CD4-positive, alpha-beta memory T cell (primary cell): ENCODE measurements at regions of chr17 and their contacts with region 1.

Region 1: DNA sequence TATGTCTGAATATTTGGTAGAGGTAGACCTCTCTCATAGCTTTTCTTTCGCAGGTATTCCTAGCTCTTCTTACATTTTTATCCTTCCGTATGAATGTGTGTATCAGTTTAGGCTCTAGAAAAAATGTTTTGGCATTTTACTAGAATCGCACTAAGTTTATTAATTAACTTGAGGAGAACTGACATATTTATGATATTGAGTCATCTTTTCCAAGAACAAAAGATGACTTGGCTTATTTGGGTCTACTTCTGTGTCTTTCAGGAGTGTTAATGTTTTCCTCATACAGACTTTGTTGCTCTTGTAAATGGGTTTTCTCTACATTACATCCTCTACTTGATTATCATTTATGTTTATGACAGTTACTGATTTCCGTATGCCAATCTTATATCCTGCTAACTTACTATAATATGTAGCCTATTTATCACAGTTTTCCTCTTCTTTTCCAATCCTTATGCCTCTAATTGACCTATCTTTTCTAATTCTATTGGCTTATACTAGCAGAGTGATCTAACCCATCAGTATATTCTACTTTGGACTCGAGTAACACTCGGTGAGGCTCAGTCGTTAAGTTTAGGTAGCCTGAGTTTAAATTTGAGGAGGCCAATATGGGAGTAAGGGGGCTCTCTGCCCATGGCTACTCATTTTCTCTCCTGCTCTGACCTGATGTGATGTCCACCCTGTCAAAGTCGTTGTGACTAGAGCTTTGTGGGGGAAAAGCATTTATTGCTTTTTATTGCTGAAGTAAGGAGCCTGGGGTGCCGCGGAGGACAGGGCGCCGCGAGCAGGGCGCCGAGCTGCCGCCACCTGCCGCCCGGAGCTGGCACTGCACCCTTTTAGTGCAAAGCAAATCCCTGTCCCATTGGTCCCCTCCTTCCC is 20.0 kb downstream of the ST6GALNAC1 start:
- DNase-seq: peak; percentile 67 to 73 (median 70)
- H3K4me3 ChIP-seq: no peak overlapping the region
- H3K4me3 Mint-ChIP-seq: no peak overlapping the region
- H3K27ac ChIP-seq: no peak overlapping the region
- H3K27ac Mint-ChIP-seq: peak overlapping the region in 1 of 7 donors; percentile 55
- H3K4me1 ChIP-seq: peaks cover 4% of the 10 kb centered on the region
- H3K4me1 Mint-ChIP-seq: peaks cover 0 to 6% (median under 1%) of the 10 kb centered on the region in 4 donors
- H3K27me3 ChIP-seq: no peaks in the 10 kb centered on the region
- H3K27me3 Mint-ChIP-seq: peaks cover 0 to 1% of the 10 kb centered on the region in 2 donors

Region 2: GRCh38 chr17:76005263-76006149 is 618.0 kb before region 1 on chr17:
- CTCF ChIA-PET with region 1: no interaction called
- POLR2A ChIA-PET with region 1: no interaction called
- intact Hi-C with region 1: no loop called
- DNase-seq: peak; percentile 68 to 76 (median 74)
- H3K4me3 ChIP-seq: no peak overlapping the region
- H3K4me3 Mint-ChIP-seq: no peak overlapping the region
- H3K27ac ChIP-seq: no peak overlapping the region
- H3K27ac Mint-ChIP-seq: peak overlapping the region in 4 of 7 donors; percentile 2 to 59 (median 24)
- H3K4me1 ChIP-seq: no peaks in the 10 kb centered on the region
- H3K4me1 Mint-ChIP-seq: peaks cover 0 to 5% (median 3%) of the 10 kb centered on the region in 4 donors
- H3K27me3 ChIP-seq: no peaks in the 10 kb centered on the region
- H3K27me3 Mint-ChIP-seq: no peaks in the 10 kb centered on the region

Region 3: GRCh38 chr17:76296186-76296585 is 327.3 kb before region 1 on chr17:
- CTCF ChIA-PET with region 1: no interaction called
- POLR2A ChIA-PET with region 1: no interaction called
- intact Hi-C with region 1: no loop called
- DNase-seq: no peak
- H3K4me3 ChIP-seq: no peak overlapping the region
- H3K4me3 Mint-ChIP-seq: no peak overlapping the region
- H3K27ac ChIP-seq: no peak overlapping the region
- H3K27ac Mint-ChIP-seq: peak overlapping the region in 1 of 7 donors; percentile 46
- H3K4me1 ChIP-seq: no peaks in the 10 kb centered on the region
- H3K4me1 Mint-ChIP-seq: peaks cover 0 to 2% (median under 1%) of the 10 kb centered on the region in 4 donors
- H3K27me3 ChIP-seq: no peaks in the 10 kb centered on the region
- H3K27me3 Mint-ChIP-seq: no peaks in the 10 kb centered on the region

Region 4: DNA sequence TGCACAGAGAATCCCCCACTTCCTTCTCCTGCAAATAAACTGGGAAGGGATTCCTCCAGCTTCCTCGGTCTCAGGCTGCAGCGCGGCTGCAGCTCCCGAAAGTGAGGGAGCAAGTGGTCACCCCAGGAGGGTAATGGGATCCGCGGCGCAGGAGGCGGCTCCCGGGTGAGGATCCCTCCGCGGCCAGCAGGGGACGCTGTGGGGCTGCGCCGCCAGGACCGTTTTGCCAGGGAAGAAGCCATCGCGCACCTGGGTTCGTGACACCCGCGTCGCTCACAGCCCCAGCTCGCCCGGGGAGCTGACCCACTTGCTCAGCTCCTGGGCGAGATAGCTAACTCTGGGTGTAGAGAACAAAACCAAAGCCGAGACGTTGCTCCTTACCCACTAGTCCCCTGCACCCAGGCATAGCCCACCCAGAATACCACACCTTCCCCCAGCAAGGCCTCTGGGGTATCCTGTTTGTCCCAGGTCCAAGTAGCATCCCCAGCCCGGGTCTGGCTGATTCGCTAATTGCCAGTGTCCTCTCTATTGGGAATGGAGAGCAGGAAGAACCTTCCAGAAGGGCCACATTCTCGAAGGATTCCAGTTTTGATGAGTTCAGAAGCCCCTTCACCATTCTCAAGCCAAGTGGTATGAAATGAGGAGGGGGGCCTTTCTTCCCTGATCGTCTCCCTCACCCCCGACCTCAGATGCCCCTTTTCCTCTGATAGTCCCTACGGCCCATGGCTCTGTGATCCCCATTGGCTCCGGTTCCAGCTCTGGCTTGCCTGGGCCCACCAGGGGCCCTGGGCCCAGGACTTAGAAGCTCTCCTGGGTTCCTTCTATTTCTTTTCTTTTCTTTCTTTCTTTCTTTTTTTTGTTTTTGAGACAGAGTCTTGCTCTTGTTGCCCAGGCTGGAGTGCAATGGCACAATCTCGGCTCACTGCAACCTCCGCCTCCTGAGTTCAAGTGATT is 100.1 kb before region 1 on chr17:
- CTCF ChIA-PET with region 1: interaction called, 126 read pairs
- POLR2A ChIA-PET with region 1: interaction called, 6 read pairs
- intact Hi-C with region 1: loop called (anchors 1 kb)
- DNase-seq: peak; percentile 67 to 84 (median 78)
- H3K4me3 ChIP-seq: no peak overlapping the region
- H3K4me3 Mint-ChIP-seq: peak overlapping the region in 6 of 8 donors; percentile 32 to 79 (median 64)
- H3K27ac ChIP-seq: no peak overlapping the region
- H3K27ac Mint-ChIP-seq: peak overlapping the region; percentile 58 to 97 (median 88)
- H3K4me1 ChIP-seq: peaks cover 27% of the 10 kb centered on the region
- H3K4me1 Mint-ChIP-seq: peaks cover 15 to 51% (median 27%) of the 10 kb centered on the region in 4 donors
- H3K27me3 ChIP-seq: no peaks in the 10 kb centered on the region
- H3K27me3 Mint-ChIP-seq: no peaks in the 10 kb centered on the region

Region 5: DNA sequence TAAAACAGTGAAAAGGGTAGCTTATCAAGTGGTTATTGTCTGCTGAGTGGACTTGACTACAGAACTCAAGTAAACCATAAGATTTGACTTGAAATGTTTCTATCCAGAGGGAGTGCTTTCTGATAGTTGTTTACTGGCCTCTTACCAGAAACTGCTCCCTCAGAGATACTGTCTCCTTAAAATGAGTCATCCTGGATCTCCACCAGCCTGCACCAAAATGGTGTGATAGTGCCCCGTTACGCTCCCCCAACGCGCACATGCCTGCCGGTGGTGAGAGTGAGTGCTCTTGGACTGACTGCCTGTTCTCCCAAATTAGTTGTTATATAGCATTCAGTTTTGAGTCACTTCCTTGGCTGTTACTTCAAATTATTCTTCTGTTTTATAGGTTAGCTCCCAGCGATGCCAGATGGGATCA is 60.8 kb before region 1 on chr17:
- CTCF ChIA-PET with region 1: interaction called, 113 read pairs
- POLR2A ChIA-PET with region 1: interaction called, 24 read pairs
- intact Hi-C with region 1: loop called (anchors 1 kb)
- DNase-seq: no peak
- H3K4me3 ChIP-seq: no peak overlapping the region
- H3K4me3 Mint-ChIP-seq: peak overlapping the region; percentile 43 to 84 (median 56)
- H3K27ac ChIP-seq: peak overlapping the region; percentile 32
- H3K27ac Mint-ChIP-seq: peak overlapping the region; percentile 85 to 100 (median 87)
- H3K4me1 ChIP-seq: peaks cover 50% of the 10 kb centered on the region
- H3K4me1 Mint-ChIP-seq: peaks cover 44 to 86% (median 61%) of the 10 kb centered on the region in 4 donors
- H3K27me3 ChIP-seq: no peaks in the 10 kb centered on the region
- H3K27me3 Mint-ChIP-seq: no peaks in the 10 kb centered on the region

Region 6: GRCh38 chr17:76612977-76613851 is 10.3 kb before region 1 on chr17:
- CTCF ChIA-PET with region 1: interaction called, 31 read pairs
- POLR2A ChIA-PET with region 1: interaction called, 3 read pairs
- intact Hi-C with region 1: no loop called
- DNase-seq: no peak
- H3K4me3 ChIP-seq: no peak overlapping the region
- H3K4me3 Mint-ChIP-seq: no peak overlapping the region
- H3K27ac ChIP-seq: no peak overlapping the region
- H3K27ac Mint-ChIP-seq: peak overlapping the region in 2 of 7 donors; percentile 22
- H3K4me1 ChIP-seq: no peaks in the 10 kb centered on the region
- H3K4me1 Mint-ChIP-seq: peaks cover 0 to 7% (median 2%) of the 10 kb centered on the region in 4 donors
- H3K27me3 ChIP-seq: no peaks in the 10 kb centered on the region
- H3K27me3 Mint-ChIP-seq: peaks cover 3 to 4% of the 10 kb centered on the region in 2 donors

Region 7: DNA sequence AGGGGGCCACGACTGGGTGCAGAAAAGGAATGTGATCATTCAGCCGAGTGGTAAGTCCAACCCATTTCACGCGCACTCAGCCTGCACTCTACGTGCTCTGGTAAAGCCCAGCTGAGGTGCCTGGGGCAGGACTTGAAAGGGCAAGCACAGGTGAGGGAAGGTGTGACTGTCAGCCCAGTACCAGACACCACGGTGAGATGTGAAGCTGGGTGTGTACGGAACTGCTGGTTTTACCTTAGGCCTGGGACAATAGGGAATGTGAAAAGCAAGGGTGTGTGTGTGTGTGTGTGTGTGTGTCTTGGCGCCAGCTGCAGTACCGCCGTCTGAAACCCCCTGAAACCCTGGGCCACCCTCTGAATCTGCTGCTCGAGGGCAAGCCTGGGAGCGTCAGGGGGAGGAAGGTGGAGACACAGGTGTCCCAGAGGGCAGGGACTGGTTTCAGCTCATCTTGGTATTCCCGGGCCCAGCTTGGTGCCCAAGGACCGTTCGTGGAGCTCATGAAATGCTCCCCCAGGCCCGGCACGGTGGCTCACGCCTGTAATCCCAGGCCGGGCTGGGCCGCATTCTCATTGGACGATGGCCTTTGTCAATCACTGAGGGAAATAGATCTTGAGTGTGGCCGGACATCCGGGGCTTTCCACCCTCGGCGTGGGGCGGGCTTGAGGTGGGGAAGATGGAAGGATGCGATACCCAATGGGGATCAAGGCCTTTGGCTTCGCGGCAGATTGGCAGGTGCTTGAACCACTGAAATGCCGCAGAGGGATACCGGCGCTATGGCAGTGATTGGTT is 47.8 kb after region 1 on chr17:
- CTCF ChIA-PET with region 1: interaction called, 9 read pairs
- POLR2A ChIA-PET with region 1: interaction called, 20 read pairs
- intact Hi-C with region 1: loop called (anchors 5 kb)
- DNase-seq: peak; percentile 98 to 99 (median 99)
- H3K4me3 ChIP-seq: peak overlapping the region; percentile 75 to 83
- H3K4me3 Mint-ChIP-seq: peak overlapping the region; percentile 87 to 97 (median 92)
- H3K27ac ChIP-seq: peak overlapping the region; percentile 72
- H3K27ac Mint-ChIP-seq: peak overlapping the region; percentile 91 to 98 (median 97)
- H3K4me1 ChIP-seq: peaks cover 34% of the 10 kb centered on the region
- H3K4me1 Mint-ChIP-seq: peaks cover 22 to 32% (median 29%) of the 10 kb centered on the region in 4 donors
- H3K27me3 ChIP-seq: no peaks in the 10 kb centered on the region
- H3K27me3 Mint-ChIP-seq: no peaks in the 10 kb centered on the region

Region 8: DNA sequence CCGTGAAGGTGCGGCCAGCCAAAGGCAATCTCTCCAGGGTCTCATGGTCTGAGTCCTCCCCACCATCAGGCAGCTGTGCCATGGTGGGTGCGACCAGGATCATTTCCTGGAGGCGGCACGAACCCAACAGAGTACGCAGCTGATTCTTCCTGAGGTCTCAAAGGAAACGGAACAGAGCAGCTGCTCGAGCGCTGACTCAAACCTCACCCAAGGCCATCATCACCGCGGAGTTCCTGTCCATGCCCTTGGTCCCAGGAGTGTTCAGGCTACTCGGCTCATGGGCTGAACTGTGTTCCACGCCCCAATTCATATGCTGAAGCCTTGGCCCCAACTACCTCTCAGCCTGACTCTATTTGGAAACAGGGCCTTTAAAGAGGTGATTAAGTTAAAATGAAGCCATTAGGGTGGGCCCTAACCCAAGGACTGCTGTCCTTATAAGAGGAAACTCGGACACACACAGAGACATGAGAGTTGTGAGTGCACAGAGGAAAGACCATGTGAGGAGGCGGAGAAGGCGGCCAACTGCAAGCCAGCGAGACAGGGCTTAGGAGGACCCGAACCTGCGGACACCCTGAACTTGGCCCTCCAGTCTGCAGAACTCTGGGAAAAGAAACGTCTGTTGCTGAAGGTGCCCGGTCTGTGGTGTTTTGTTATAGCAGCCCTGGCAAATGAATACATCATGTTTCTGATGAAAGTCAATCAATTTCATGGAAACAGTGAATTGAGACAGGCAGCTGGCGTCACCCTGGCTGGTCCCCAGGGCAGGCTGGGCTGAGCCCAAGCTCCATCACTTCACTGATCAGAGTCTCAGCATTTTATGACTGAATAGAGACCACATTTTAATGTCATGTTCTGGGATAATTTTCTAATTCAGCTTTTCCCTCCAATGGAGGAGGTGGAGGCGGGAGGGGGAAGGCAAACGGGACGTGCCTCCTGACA is 73.5 kb after region 1 on chr17:
- CTCF ChIA-PET with region 1: no interaction called
- POLR2A ChIA-PET with region 1: no interaction called
- intact Hi-C with region 1: no loop called
- DNase-seq: no peak
- H3K4me3 ChIP-seq: no peak overlapping the region
- H3K4me3 Mint-ChIP-seq: no peak overlapping the region
- H3K27ac ChIP-seq: no peak overlapping the region
- H3K27ac Mint-ChIP-seq: peak overlapping the region in 1 of 7 donors; percentile 76
- H3K4me1 ChIP-seq: peaks cover 5% of the 10 kb centered on the region
- H3K4me1 Mint-ChIP-seq: peaks cover 0 to 38% (median 5%) of the 10 kb centered on the region in 4 donors
- H3K27me3 ChIP-seq: no peaks in the 10 kb centered on the region
- H3K27me3 Mint-ChIP-seq: no peaks in the 10 kb centered on the region